PC-3 (cell line): ENCODE measurements at regions of chr1 and their contacts with region 1.

Region 1: GRCh38 chr1:227459326-227459841 is 104.0 kb upstream of the ZNF678 start:
- DNase-seq: no peak
- ATAC-seq: no peak
- H3K4me3 ChIP-seq: no peak overlapping the region
- H3K27ac ChIP-seq: no peak overlapping the region
- H3K4me1 ChIP-seq: no peaks in the 10 kb centered on the region
- H3K27me3 ChIP-seq: peaks cover 51% of the 10 kb centered on the region
- CTCF ChIP-seq: no peak

Region 2: DNA sequence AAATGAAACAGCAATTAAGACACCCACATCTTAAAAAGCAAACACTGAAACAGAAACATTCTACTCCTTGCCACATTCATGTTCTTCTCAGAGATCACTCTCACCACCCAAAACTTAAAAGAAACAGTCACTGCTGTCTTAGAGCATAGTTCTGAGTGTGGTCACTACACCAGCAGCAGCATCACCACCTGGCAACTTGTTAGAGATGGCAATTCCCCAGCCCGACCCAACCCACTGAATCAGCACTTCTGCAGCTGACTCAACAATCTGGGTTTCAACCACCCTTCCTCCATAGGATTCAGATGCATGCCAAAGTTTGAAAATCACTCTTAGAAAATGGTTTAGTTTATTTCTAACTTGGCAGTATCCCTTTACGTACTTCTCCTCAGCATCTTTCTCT is 267.2 kb before region 1 on chr1:
- CTCF ChIA-PET with region 1: interaction called, 11 read pairs
- POLR2A ChIA-PET with region 1: no interaction called
- intact Hi-C with region 1: no loop called
- DNase-seq: peak; percentile 99
- ATAC-seq: peak; percentile 100
- H3K4me3 ChIP-seq: no peak overlapping the region
- H3K27ac ChIP-seq: peak overlapping the region; percentile 39
- H3K4me1 ChIP-seq: peaks cover 13% of the 10 kb centered on the region
- H3K27me3 ChIP-seq: no peaks in the 10 kb centered on the region
- CTCF ChIP-seq: no peak